HepG2 (cell line): ENCODE measurements at regions of chr19 and their contacts with region 1.

Region 1: GRCh38 chr19:35114353-35115176 is 1.1 kb upstream of the FXYD3 start:
- DNase-seq: peak; percentile 43
- ATAC-seq: peak; percentile 72
- H3K4me3 ChIP-seq: peak overlapping the region; percentile 18 to 64 (median 29); a peak in 5 of 6 replicates
- H3K27ac ChIP-seq: no peak overlapping the region
- H3K4me1 ChIP-seq: peaks cover 92% of the 10 kb centered on the region
- H3K27me3 ChIP-seq: 0 out of 5 replicates have a peak, but pooled peaks cover 0 to 6% of the 10 kb centered on the region in 2 experiments
- CTCF ChIP-seq: peak; percentile 95
- EP300 ChIP-seq: no peak
- POLR2A ChIP-seq: no peak
- RAD21 ChIP-seq: peak; percentile 69

Region 2: DNA sequence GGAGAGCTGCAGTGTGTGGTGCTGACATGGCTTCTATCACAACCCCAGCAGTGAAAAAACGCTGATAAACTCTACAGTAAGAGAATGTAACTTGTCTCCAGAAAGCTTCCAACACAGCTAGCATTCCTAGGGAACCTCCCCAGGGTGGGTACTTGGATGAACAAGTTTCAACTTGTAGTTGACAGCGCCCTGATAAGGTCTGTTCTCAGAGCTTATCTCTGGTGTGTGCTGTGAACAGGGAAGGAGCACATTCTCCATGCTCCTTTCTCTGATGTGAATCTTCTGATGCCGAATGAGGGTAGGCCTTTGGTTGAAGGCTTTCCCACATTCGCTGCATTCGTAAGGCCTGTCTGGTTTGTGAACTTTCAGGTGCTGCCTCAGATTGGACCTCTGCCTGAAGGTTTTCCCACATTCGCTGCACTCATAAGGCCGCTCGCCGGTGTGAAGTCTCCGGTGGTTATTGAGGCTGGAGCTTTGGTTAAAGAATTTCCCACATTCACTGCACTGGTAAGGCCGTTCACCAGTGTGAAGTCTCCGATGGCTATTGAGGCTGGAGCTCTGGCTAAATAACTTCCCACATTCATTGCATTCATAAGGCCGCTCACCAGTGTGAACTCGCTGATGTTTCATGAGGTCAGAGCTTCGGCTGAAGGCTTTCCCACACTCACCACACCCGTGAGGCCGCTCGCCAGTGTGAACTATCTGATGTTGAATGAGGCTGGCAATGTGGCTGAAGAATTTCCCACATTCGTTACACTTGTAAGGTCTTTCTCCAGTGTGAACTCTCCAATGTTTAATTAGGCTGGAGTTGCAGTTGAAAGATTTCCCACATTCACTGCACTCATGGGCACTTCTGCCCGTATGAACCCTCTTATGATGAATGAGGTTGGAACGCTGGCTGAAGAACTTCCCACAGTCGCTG is 156.5 kb before region 1 on chr19:
- CTCF ChIA-PET with region 1: no interaction called
- POLR2A ChIA-PET with region 1: no interaction called
- in situ Hi-C with region 1: no loop called
- intact Hi-C with region 1: no loop called
- DNase-seq: no peak
- ATAC-seq: no peak
- H3K4me3 ChIP-seq: no peak overlapping the region
- H3K27ac ChIP-seq: no peak overlapping the region
- H3K4me1 ChIP-seq: peaks cover 21% of the 10 kb centered on the region
- H3K27me3 ChIP-seq: no peaks in the 10 kb centered on the region; a peak in 1 of 5 replicates
- CTCF ChIP-seq: no peak
- EP300 ChIP-seq: no peak
- POLR2A ChIP-seq: no peak
- RAD21 ChIP-seq: no peak

Region 3: DNA sequence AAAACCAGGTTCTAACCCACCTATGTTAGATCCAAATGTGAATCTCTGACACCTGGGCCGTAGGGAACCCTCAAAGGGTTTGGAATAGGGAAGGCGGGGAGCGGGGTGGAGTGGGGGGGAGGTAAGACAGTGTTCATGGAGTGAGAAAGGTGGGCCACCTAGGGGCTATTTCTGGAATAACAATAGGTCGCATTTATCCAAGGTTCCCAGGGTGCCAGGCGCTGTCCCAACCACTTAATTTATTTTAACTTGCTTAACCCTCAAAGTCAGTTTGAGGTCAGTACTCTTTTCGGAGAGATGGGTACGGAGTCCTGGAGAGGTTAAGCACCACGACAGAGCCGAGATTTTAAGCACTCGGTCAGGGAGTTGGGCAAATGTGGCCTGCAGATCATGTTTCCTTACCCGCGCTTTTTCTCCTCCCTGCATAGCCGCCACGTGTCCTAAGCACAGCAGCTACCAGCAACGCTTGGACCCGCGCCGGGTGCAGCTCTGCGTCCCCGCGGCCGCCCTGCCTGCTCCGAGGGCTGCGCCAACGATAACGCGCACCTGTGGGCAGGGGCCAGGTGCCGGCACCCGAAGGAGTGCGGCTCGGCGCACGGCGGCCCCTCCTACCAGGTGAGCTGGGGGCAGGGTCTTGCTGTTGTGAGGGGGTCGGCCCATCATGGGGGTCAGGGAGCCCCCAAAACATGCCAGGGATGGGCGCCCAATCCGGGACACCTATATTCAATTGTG is 23.9 kb before region 1 on chr19:
- CTCF ChIA-PET with region 1: no interaction called
- POLR2A ChIA-PET with region 1: no interaction called
- in situ Hi-C with region 1: no loop called
- intact Hi-C with region 1: no loop called
- DNase-seq: peak; percentile 54
- ATAC-seq: peak; percentile 88
- H3K4me3 ChIP-seq: no peak overlapping the region
- H3K27ac ChIP-seq: no peak overlapping the region
- H3K4me1 ChIP-seq: peaks cover 24% of the 10 kb centered on the region
- H3K27me3 ChIP-seq: peaks cover 0 to 14% of the 10 kb centered on the region in 2 experiments; a peak in 3 of 5 replicates
- CTCF ChIP-seq: peak; percentile 68
- EP300 ChIP-seq: no peak
- POLR2A ChIP-seq: no peak
- RAD21 ChIP-seq: no peak

Region 4: DNA sequence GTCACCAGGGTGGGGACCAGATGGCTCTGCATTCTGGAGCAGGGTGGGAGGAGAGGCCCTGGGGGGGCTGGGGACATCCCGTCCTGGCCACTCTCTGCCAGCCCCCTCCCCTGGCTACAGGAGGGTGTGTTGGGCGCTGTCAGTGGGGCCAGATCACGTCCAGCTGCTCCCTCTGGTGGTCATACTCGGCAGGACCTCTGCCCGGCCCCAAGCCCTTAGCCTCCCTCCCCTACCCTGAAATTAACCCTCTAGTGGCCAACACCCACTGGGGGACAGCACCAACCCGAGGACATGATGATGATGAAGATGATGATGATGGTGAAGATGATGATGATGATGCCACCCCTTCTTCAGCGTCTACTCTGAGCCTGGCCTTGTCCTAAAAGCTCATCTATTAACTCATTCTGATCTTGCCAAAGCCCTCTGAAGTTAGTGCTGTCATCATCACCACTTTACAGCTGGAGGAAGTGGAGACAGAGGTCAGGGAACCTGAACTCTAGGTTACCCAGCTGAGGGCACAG is 20.9 kb after region 1 on chr19:
- CTCF ChIA-PET with region 1: interaction called, 11 read pairs
- POLR2A ChIA-PET with region 1: no interaction called
- in situ Hi-C with region 1: no loop called
- intact Hi-C with region 1: no loop called
- DNase-seq: peak; percentile 65
- ATAC-seq: peak; percentile 50
- H3K4me3 ChIP-seq: no peak overlapping the region
- H3K27ac ChIP-seq: no peak overlapping the region
- H3K4me1 ChIP-seq: peaks cover 88% of the 10 kb centered on the region
- H3K27me3 ChIP-seq: no peaks in the 10 kb centered on the region
- CTCF ChIP-seq: peak; percentile 96
- EP300 ChIP-seq: no peak
- POLR2A ChIP-seq: no peak
- RAD21 ChIP-seq: peak; percentile 87

Region 5: DNA sequence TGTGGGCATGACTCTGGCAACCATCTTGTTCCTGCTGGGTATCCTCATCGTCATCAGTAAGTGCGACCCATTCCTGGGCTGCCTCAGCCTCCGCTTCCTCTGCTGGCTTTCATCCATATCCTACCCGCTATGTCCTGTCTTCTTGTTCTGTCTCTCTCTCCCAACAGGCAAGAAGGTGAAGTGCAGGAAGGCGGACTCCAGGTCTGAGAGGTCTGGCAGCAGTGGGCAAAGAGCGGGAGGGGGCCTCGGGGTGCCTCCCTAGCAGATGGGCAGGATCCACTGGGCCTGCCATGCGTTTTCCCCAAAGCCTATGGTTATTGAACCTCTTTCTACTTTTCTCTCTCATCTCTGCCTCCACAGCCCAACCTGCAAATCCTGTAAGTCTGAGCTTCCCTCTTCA is 36.7 kb after region 1 on chr19:
- CTCF ChIA-PET with region 1: no interaction called
- POLR2A ChIA-PET with region 1: no interaction called
- in situ Hi-C with region 1: no loop called
- intact Hi-C with region 1: no loop called
- DNase-seq: no peak
- ATAC-seq: no peak
- H3K4me3 ChIP-seq: no peak overlapping the region
- H3K27ac ChIP-seq: no peak overlapping the region
- H3K4me1 ChIP-seq: peaks cover 12% of the 10 kb centered on the region
- H3K27me3 ChIP-seq: peaks cover 21 to 53% of the 10 kb centered on the region in 2 experiments; a peak in 4 of 5 replicates
- CTCF ChIP-seq: no peak
- EP300 ChIP-seq: no peak
- POLR2A ChIP-seq: no peak
- RAD21 ChIP-seq: no peak